Activated CD4-positive, alpha-beta memory T cell treated with anti-CD3 and anti-CD28 coated beads for 36 hours (primary cell): ENCODE measurements at regions of chr6 and their contacts with region 1.

Region 1: DNA sequence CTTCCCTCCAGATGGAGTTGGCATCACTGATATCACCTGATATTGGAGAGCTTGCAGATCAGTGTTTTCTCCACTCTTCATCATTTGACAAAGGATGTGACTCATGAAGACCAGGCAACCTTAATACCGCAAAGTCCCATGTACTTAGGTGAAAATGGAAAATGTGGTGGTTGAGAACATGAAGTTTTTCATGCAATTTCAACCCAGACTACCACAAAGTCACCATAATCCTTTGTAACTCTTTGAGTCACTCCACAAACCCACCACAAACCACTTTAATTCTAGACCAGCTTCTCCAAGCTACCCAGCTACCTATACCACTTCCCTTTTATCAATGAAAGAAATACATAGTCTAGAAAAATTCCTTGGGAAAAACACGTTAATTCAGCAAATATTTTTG is 7.1 kb downstream of the NHLRC1 start:
- DNase-seq: peak; percentile 10
- H3K4me3 Mint-ChIP-seq: peak overlapping the region; percentile 35
- H3K27ac Mint-ChIP-seq: peak overlapping the region; percentile 38
- H3K4me1 Mint-ChIP-seq: peaks cover 10% of the 10 kb centered on the region
- H3K27me3 Mint-ChIP-seq: peaks cover 35% of the 10 kb centered on the region

Region 2: GRCh38 chr6:17015144-17015543 is 1100.2 kb before region 1 on chr6:
- CTCF ChIA-PET with region 1: no interaction called
- POLR2A ChIA-PET with region 1: no interaction called
- intact Hi-C with region 1: loop called (anchors 10 kb)
- DNase-seq: peak; percentile 44
- H3K4me3 Mint-ChIP-seq: peak overlapping the region; percentile 54
- H3K27ac Mint-ChIP-seq: no peak overlapping the region
- H3K4me1 Mint-ChIP-seq: peaks cover 18% of the 10 kb centered on the region
- H3K27me3 Mint-ChIP-seq: peaks cover 27% of the 10 kb centered on the region

Region 3: GRCh38 chr6:17884498-17885478 is 230.6 kb before region 1 on chr6:
- CTCF ChIA-PET with region 1: interaction called, 3 read pairs
- POLR2A ChIA-PET with region 1: no interaction called
- intact Hi-C with region 1: loop called (anchors 2 kb)
- DNase-seq: no peak
- H3K4me3 Mint-ChIP-seq: no peak overlapping the region
- H3K27ac Mint-ChIP-seq: no peak overlapping the region
- H3K4me1 Mint-ChIP-seq: peaks cover 20% of the 10 kb centered on the region
- H3K27me3 Mint-ChIP-seq: peaks cover 36% of the 10 kb centered on the region

Region 4: DNA sequence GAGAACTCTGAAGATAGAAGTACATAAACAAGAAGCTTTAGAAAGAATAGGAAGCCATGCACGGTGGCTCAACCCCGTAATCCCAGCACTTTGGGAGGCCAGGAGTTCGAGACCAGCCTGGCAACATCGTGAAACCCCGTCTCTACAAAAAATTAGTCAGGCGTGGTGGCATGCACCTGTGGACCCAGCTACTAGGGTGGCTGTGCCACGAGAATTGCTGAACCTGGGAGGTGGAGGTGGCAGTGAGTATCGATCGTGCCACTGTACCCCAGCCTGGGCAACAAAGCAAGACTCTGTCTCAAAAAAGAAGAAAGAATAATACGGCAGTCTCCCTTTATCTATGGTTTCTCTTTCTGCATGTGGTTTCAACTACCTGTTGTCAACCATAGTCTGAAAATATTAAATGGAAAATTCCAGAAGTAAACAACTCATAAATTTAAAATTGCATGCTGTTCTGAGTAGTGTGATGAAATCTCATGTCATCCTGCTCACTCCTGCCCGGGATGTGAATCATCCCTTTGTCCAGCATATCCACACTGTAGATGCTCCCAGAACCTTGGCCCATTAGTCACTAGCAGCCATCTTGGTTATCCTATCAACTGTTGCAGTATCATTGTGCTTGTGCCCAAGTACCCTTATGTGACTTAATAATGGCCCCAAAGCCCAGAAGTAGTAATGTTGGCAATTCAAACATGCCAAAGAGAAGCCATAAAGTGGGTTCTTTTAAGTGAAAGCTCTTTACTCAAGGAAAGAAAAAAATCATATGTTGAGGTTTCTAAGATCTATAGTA is 126.9 kb after region 1 on chr6:
- CTCF ChIA-PET with region 1: no interaction called
- POLR2A ChIA-PET with region 1: no interaction called
- intact Hi-C with region 1: no loop called
- DNase-seq: no peak
- H3K4me3 Mint-ChIP-seq: no peak overlapping the region
- H3K27ac Mint-ChIP-seq: peak overlapping the region; percentile 64
- H3K4me1 Mint-ChIP-seq: peaks cover 57% of the 10 kb centered on the region
- H3K27me3 Mint-ChIP-seq: no peaks in the 10 kb centered on the region